ENCODE measurements at regions of chr3 and their contacts with region 1.

Region 1: GRCh38 chr3:45942051-45942825 is 1.0 kb upstream of the CXCR6 start:
- DNase-seq: no peak
- H3K4me3 ChIP-seq: no peak overlapping the region
- H3K27ac ChIP-seq: no peak overlapping the region
- H3K4me1 ChIP-seq: no peaks in the 10 kb centered on the region
- H3K27me3 ChIP-seq: no peaks in the 10 kb centered on the region
- CTCF ChIP-seq: no peak
- POLR2A ChIP-seq: no peak

Region 2: DNA sequence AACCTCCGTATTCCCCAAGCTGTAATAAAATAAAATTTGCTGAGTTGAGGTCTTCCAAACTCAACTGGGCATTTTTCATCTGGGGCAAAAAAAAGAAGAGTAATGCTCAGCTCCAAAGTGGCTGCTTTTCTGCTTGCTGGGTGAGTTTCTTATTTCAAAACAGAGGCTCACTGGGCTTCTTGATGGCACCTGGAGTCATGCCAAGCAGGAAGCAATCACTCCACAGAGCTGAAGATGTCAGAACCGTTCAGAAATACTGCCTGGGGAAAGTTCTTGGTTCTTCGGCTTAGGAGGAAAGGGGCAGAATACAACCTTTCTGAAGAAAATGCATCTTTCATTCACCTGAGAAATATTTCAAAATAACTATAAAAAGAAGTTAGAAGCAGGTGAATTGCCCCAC is 51.8 kb before region 1 on chr3:
- intact Hi-C with region 1: no loop called
- DNase-seq: peak; percentile 20
- H3K4me3 ChIP-seq: no peak overlapping the region
- H3K27ac ChIP-seq: no peak overlapping the region
- H3K4me1 ChIP-seq: no peaks in the 10 kb centered on the region
- H3K27me3 ChIP-seq: no peaks in the 10 kb centered on the region
- CTCF ChIP-seq: no peak
- POLR2A ChIP-seq: no peak

Region 3: DNA sequence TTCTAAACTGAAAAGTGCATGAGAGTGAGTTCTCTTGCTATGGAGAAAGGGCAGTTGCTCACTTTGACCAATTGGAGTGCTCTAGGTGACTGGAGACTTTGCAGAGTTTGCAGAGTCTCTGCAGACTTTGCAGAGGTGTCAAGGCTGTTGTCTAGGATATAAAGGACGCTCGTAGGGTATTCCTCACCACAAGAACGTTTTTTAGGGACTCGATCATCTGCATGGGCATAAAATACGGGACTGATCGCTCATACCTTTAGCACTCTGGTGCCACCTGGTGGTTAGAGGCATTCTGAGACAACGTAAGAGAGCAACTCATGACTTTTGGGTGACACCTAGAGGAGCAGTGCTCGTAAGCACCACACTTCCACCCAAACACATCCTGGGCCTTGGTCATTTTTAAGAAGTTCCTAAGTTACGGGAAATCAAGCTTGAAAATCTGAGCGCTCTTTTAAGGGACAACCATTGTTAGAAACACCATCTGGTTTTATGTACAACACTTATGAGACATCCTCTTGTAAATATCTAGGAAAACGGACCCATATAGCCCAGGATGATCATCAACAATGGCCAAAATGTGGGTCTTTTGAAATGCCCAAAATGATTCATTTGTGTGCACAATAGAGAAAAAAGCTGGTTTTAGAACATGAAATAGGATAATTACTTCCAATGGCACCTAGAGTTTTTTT is 136.6 kb after region 1 on chr3:
- intact Hi-C with region 1: loop called (anchors 5 kb)
- DNase-seq: peak; percentile 98
- H3K4me3 ChIP-seq: no peak overlapping the region
- H3K27ac ChIP-seq: no peak overlapping the region
- H3K4me1 ChIP-seq: peaks cover 4% of the 10 kb centered on the region
- H3K27me3 ChIP-seq: no peaks in the 10 kb centered on the region
- CTCF ChIP-seq: peak; percentile 91 to 96 (median 95)
- POLR2A ChIP-seq: no peak